PC-3 (cell line): ENCODE measurements at regions of chr16 and their contacts with region 1.

Region 1: DNA sequence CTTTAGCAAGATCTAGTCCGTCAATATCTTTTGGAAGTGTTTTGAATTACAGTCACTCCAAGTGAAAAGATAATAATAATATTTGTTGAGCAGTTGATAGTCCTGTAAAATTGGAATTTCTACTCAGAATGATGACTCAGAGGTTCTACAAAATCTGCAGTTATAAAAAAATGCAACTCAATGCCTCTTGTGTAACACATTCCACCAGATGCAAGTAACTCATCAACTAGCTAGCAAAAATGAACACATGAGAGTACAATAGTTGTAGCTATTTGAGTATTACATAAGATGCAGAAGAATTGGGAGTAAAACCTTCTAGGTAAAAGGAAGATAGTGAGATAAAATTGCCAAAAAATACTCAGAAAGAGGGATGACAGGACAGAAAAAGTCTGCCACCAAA is 177.2 kb downstream of the CDH8 start:
- DNase-seq: peak; percentile 61
- ATAC-seq: peak; percentile 43
- H3K4me3 ChIP-seq: no peak overlapping the region
- H3K27ac ChIP-seq: no peak overlapping the region
- H3K4me1 ChIP-seq: peaks cover 10% of the 10 kb centered on the region; the same call in 1 of the 2 replicates
- H3K27me3 ChIP-seq: no peaks in the 10 kb centered on the region
- CTCF ChIP-seq: no peak

Region 2: DNA sequence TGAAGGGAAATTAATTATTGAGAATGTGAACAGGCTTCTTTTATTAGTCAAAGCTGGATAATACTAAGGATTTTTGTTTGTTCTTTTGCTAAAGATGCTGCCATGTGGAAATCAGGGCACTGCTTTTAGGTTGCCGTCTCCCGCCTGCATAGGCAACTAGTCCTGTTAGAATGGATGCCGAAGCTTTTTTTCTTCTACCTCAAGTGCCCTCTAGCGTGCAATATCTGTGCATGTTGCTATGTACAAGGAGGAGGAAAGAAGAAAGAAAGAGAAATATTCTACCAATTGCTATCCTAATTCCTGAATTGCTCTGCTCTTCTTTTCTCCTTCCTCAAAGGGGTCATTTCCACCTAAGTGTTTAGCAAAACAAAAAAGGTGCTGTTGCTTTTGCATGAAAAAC is 182.4 kb after region 1 on chr16:
- CTCF ChIA-PET with region 1: no interaction called
- POLR2A ChIA-PET with region 1: no interaction called
- intact Hi-C with region 1: loop called (anchors 1 kb)
- DNase-seq: peak; percentile 68
- ATAC-seq: peak; percentile 83
- H3K4me3 ChIP-seq: no peak overlapping the region
- H3K27ac ChIP-seq: no peak overlapping the region
- H3K4me1 ChIP-seq: no peaks in the 10 kb centered on the region
- H3K27me3 ChIP-seq: no peaks in the 10 kb centered on the region; the same call in 1 of the 2 replicates
- CTCF ChIP-seq: peak; percentile 70